ENCODE measurements at regions of chr16 and their contacts with region 1.

Region 1: DNA sequence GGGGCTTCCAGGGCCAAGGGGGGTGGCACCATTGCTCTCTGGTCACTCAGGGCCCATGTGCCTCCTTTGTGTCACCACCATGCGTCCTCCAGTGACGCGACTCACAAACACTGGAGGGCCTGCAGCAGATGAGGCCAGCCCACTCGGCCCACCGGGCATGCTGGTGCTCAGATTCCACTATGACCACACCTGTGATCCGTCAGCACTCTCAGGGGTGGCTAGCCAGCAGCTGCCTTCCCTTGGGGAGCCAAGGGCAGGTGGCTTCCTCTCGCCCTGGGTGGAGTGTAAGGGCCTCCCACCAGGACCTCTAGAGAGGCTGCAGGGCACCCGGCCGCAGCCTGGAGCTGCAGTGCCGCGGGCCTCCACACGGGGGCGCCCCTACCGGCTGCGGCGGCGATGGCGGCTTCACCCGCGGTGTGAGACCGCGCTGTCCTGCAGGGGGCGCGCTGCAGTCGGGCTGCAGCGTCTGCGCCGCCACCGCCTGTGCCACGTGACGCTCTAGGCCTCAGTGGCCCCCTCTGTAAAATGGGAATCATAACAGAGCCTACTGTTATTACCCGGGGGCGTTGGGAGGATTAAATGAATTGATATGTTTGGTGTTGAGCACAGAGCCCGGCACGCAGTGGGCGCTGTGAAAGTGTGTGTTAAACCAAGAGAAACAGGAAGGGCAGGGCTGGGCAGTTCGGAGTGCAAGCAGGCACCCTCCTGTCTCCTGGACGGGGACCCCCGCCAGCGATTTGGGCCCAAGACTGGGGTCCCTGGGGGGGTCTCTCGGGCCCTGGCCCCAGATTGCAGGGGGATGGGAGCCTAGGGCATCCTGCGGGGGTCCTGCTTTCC is 192.4 kb upstream of the GSE1 start:
- DNase-seq: peak; percentile 49
- ATAC-seq: peak; percentile 76
- H3K4me3 ChIP-seq: no peak overlapping the region
- H3K27ac ChIP-seq: no peak overlapping the region
- H3K4me1 ChIP-seq: peaks cover 8 to 16% of the 10 kb centered on the region in 2 experiments
- H3K27me3 ChIP-seq: no peaks in the 10 kb centered on the region
- CTCF ChIP-seq: peak; percentile 100
- POLR2A ChIP-seq: no peak
- RAD21 ChIP-seq: peak; percentile 98

Region 2: DNA sequence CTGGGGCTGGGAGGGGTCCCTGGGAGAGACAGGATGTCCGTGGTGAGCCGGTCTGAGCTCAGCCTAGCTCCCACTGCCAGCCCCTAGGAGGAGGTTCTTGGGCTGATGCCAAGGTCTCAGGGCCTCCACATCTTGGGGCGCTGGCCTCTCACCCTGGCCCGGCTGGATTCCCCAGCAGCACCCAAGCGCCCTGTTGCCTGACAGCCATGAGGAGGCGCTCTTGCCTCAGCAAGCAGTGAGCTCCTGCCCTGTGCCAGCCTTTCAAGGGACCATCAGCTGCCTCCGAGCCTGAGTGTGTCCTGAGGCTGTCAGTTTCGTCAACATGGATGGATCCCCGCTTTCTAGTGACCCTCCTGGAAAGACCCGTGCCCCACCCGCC is 73.5 kb before region 1 on chr16:
- CTCF ChIA-PET with region 1: interaction called, 11 read pairs
- POLR2A ChIA-PET with region 1: no interaction called
- RAD21 ChIA-PET with region 1: interaction called in 1 of 2 experiments, 3 read pairs
- intact Hi-C with region 1: no loop called
- DNase-seq: no peak
- ATAC-seq: peak; percentile 66
- H3K4me3 ChIP-seq: no peak overlapping the region
- H3K27ac ChIP-seq: no peak overlapping the region
- H3K4me1 ChIP-seq: peaks cover 18 to 21% of the 10 kb centered on the region in 2 experiments
- H3K27me3 ChIP-seq: no peaks in the 10 kb centered on the region
- CTCF ChIP-seq: peak in 2 of 3 experiments; percentile 77 to 85; a peak in 5 of 6 replicates
- POLR2A ChIP-seq: no peak
- RAD21 ChIP-seq: peak; percentile 84

Region 3: DNA sequence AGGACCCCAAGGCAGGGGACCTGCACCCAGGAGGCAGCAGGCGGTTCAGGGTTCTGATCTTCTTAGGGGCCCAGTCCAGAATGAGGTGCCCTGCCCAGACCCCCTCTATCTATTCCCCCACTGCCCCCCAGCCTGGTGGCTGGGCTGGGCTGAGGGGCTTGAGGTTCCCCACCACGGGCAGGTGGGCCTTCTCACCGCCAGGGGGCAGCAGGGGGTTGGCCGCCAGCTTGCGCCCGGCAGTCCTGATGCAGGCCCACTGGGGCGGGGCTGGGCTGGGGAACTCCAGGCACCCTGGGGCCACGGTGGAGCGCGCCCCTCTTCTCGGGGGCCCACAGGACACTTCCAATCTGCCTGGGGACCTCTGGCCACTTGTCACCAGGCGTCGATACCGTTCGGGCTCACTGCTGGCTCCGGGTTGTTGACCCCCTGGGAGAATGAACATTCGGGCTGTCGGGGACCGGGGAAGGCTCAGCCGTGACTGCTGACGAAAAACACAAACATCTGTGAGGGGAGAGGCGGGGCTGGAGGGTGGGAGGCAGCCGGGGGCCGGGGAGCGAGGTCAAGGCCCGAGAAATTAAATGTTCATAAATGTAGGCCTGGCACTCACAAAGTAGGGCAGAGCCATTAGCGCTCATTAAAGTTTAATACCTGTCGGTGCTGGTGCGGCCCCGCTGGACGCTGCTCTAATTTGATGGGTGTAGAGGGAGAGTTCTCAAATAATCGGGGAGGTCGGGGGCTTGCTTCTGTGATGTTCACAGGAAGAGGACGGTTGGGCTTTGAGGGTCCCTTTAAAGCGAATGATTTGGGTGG is 26.8 kb before region 1 on chr16:
- CTCF ChIA-PET with region 1: interaction called, 43 read pairs
- POLR2A ChIA-PET with region 1: no interaction called
- RAD21 ChIA-PET with region 1: interaction called, 3 read pairs
- intact Hi-C with region 1: no loop called
- DNase-seq: no peak
- ATAC-seq: peak; percentile 54
- H3K4me3 ChIP-seq: no peak overlapping the region
- H3K27ac ChIP-seq: no peak overlapping the region; the same call in 1 of the 2 replicates
- H3K4me1 ChIP-seq: peaks cover 58 to 72% of the 10 kb centered on the region in 2 experiments
- H3K27me3 ChIP-seq: no peaks in the 10 kb centered on the region
- CTCF ChIP-seq: peak in 2 of 3 experiments; percentile 100; a peak in 4 of 6 replicates
- POLR2A ChIP-seq: no peak
- RAD21 ChIP-seq: no peak

Region 4: GRCh38 chr16:85402910-85403692 is 17.6 kb before region 1 on chr16:
- CTCF ChIA-PET with region 1: interaction called, 54 read pairs
- POLR2A ChIA-PET with region 1: no interaction called
- RAD21 ChIA-PET with region 1: no interaction called
- intact Hi-C with region 1: no loop called
- DNase-seq: no peak
- ATAC-seq: peak; percentile 15; the same call in 1 of the 2 replicates
- H3K4me3 ChIP-seq: no peak overlapping the region
- H3K27ac ChIP-seq: no peak overlapping the region
- H3K4me1 ChIP-seq: peaks cover 9 to 15% of the 10 kb centered on the region in 2 experiments
- H3K27me3 ChIP-seq: no peaks in the 10 kb centered on the region
- CTCF ChIP-seq: no peak
- POLR2A ChIP-seq: no peak
- RAD21 ChIP-seq: no peak

Region 5: GRCh38 chr16:85554112-85554813 is 133.5 kb after region 1 on chr16:
- CTCF ChIA-PET with region 1: interaction called, 11 read pairs
- POLR2A ChIA-PET with region 1: no interaction called
- RAD21 ChIA-PET with region 1: interaction called in 1 of 2 experiments, 3 read pairs
- intact Hi-C with region 1: loop called (anchors 10 kb)
- DNase-seq: peak; percentile 80
- ATAC-seq: peak; percentile 56
- H3K4me3 ChIP-seq: peak overlapping the region; percentile 75 to 83
- H3K27ac ChIP-seq: peak overlapping the region; percentile 64
- H3K4me1 ChIP-seq: peaks cover 54 to 68% of the 10 kb centered on the region in 2 experiments
- H3K27me3 ChIP-seq: no peaks in the 10 kb centered on the region
- CTCF ChIP-seq: no peak
- POLR2A ChIP-seq: peak; percentile 42
- RAD21 ChIP-seq: no peak

Region 6: DNA sequence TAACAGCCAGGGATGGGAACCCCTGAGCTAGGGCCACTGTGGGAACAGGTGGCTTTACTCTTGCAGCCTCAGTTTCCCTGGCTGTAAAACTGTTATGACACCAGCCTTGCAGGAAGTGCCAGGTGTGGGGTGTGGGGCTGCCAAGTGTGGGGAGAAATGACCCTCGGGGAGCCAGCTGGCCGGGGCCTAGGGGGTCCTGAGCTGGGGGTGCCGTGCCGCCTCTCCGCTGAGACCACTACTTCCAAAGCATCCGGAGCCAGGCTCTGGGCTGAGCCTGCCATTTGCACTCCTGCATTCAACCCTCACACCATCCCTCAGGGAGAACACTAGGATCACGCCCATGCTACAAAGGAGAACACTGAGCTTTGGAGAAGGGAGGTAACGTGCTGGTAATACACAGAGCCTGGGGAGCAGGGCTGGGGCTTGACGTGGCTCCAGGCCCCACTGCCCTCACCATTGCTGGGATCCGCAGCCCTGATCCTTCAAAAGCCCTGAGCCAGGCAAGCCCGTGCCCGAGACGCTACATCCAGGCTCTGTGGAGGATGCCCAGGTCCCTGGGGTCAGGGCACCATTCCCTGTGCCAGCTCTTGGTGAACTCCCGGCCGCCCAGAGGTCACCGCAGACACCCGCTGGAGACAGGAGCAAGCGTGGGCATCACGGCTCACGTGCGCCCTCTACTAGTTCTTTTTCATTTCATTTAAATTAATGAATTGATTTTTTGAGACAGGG is 296.8 kb after region 1 on chr16:
- CTCF ChIA-PET with region 1: interaction called, 5 read pairs
- POLR2A ChIA-PET with region 1: no interaction called
- RAD21 ChIA-PET with region 1: no interaction called
- intact Hi-C with region 1: loop called (anchors 5 kb)
- DNase-seq: peak; percentile 49
- ATAC-seq: peak; percentile 69
- H3K4me3 ChIP-seq: no peak overlapping the region
- H3K27ac ChIP-seq: no peak overlapping the region
- H3K4me1 ChIP-seq: peaks cover 22 to 37% of the 10 kb centered on the region in 2 experiments
- H3K27me3 ChIP-seq: no peaks in the 10 kb centered on the region
- CTCF ChIP-seq: peak; percentile 54 to 91 (median 86); a peak in 5 of 6 replicates
- POLR2A ChIP-seq: no peak
- RAD21 ChIP-seq: peak; percentile 91

Measured in HCT116 (cell line).